Stomach (tissue), 19 donors: ENCODE measurements at regions of chr3 and their contacts with region 1.

Region 1: GRCh38 chr3:149115114-149115513 is 14.3 kb upstream of the HPS3 start:
- DNase-seq: no peak
- H3K4me3 ChIP-seq: no peak overlapping the region
- H3K27ac ChIP-seq: no peak overlapping the region
- H3K4me1 ChIP-seq: peaks cover 0 to 11% (median 2%) of the 10 kb centered on the region in 4 donors
- H3K27me3 ChIP-seq: no peaks in the 10 kb centered on the region
- CTCF ChIP-seq: no peak
- EP300 ChIP-seq: no peak
- POLR2A ChIP-seq: no peak

Region 2: GRCh38 chr3:148739720-148740119 is 375.4 kb before region 1 on chr3:
- intact Hi-C with region 1: no loop called
- DNase-seq: no peak
- H3K4me3 ChIP-seq: no peak overlapping the region
- H3K27ac ChIP-seq: no peak overlapping the region
- H3K4me1 ChIP-seq: no peaks in the 10 kb centered on the region
- H3K27me3 ChIP-seq: no peaks in the 10 kb centered on the region
- CTCF ChIP-seq: no peak
- EP300 ChIP-seq: no peak
- POLR2A ChIP-seq: no peak

Region 3: DNA sequence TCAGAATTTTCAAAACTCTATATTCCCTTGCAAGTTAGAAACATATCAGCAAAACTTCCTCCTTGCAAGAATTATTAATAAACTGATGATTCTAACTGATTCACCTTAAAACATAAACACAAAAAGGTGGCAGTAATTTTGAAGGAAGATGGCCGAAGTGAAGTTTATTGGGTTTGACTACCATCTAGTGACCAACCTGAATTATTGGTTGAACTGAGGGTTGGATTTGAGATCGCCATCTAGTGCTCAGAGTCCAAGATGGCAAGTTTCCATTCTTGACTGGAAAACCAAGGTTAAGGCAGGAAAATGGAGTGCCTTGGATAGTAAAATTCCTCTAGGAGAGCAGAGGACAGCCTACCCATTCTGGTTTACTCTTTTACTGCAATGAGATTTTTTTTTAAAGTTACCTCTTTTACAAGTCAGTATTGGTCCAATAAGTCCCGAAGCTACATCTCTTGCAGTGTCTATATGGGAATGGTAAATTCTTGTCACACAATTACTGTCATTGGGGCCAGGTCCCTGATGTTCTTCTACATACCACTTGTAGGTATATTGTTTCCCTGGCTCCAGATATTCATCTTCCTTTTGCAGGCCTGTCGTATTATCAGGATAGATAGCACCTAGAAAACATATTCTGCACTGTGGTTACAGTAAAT is 158.1 kb after region 1 on chr3:
- intact Hi-C with region 1: loop called (anchors 5 kb)
- DNase-seq: peak; percentile 40 to 91
- H3K4me3 ChIP-seq: no peak overlapping the region
- H3K27ac ChIP-seq: peak overlapping the region in 1 of 5 donors; percentile 0
- H3K4me1 ChIP-seq: peaks cover 7 to 35% (median 23%) of the 10 kb centered on the region in 4 donors
- H3K27me3 ChIP-seq: no peaks in the 10 kb centered on the region
- CTCF ChIP-seq: peak in 6 of 7 experiments; percentile 18 to 99 (median 86)
- EP300 ChIP-seq: no peak
- POLR2A ChIP-seq: no peak

Region 4: DNA sequence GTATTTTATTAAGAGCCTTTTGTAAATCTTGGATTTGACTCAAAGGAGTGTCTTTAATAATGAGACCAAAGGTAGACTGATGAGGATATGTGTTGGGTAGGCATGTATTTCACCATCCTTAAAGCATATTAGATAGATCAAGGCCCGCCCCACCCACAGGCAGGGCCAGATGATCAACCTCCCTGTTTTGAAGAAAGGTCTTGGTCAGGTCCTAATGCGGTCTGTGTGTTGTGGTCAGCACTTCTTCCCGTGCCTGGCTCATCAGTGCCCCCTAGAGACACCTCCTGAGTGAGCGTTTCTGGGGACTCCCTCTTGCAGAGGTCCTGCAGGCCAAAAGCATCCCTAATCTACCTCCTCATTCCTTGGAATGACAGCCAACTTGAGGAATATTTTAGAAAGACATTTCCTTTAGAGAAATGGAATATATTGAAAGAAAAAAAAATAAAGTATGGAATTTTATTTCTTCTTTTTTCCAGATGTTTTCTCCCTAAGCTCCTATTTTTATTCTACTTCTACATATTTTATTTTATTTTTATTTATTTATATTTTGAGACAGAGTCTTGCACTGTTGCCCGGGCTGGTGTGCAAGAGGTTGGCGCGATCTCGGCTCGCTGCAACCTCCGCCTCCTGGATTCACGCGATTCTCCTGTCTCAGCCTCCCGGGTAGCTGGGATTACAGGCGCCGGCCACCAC is 365.4 kb after region 1 on chr3:
- intact Hi-C with region 1: loop called (anchors 5 kb)
- DNase-seq: peak; percentile 88 to 92
- H3K4me3 ChIP-seq: no peak overlapping the region
- H3K27ac ChIP-seq: peak overlapping the region in 4 of 5 donors; percentile 69 to 79 (median 70)
- H3K4me1 ChIP-seq: peaks cover 8 to 24% (median 16%) of the 10 kb centered on the region in 4 donors
- H3K27me3 ChIP-seq: no peaks in the 10 kb centered on the region
- CTCF ChIP-seq: peak in 6 of 7 experiments; percentile 32 to 84 (median 69)
- EP300 ChIP-seq: no peak
- POLR2A ChIP-seq: no peak